ENCODE measurements at regions of chr10 and their contacts with region 1.

Region 1: GRCh38 chr10:89217057-89217990 is 10.2 kb upstream of the CH25H start:
- DNase-seq: peak in 6 of 10 donors; percentile 57 to 88 (median 66)

Region 2: GRCh38 chr10:89029785-89030437 is 187.4 kb before region 1 on chr10:
- intact Hi-C with region 1: loop called (anchors 1 kb)
- DNase-seq: peak; percentile 26 to 96 (median 79)

Region 3: DNA sequence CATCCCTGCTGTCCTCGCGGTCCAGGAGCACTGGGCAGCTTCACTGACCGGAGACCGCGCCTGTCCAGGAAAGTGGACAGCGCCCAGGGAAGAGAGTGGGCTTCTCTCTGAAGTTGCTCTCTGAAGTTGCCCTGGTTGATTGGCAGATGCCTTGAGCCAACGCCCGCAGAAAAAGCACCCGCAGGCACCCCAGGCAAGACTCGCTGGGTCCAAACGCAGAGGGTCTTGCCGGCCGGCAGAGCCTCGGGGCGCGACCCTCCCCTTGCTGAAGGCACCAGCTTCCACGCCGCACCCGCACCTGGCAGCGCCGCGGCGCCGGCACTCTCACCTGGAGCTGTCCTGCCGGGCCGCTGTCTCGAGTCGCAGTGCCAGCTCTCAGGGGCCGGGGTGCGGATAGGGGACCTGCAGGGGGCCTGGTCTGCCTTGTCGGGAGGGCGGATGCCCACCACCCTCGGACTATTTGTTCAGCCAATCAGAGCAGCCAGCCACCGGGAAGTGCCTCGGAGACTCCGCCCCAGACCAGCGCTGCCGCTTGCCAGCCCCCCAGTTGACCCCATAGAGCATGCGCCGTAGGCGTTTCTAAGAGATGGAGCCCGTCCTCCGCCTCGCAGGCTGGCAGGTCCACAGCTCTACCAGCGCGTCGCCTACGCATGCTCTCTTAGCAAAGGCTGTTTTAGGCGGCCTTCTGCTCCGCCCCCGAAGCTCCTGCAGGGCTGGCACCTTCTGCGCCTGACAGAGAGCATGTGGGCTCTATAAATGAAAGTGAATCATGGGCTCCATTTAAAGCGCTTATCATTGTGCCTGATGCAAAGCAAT is 34.3 kb after region 1 on chr10 and contains the start of gene LIPA:
- intact Hi-C with region 1: loop called (anchors 2 kb)
- DNase-seq: peak; percentile 96 to 99 (median 97)

Region 4: DNA sequence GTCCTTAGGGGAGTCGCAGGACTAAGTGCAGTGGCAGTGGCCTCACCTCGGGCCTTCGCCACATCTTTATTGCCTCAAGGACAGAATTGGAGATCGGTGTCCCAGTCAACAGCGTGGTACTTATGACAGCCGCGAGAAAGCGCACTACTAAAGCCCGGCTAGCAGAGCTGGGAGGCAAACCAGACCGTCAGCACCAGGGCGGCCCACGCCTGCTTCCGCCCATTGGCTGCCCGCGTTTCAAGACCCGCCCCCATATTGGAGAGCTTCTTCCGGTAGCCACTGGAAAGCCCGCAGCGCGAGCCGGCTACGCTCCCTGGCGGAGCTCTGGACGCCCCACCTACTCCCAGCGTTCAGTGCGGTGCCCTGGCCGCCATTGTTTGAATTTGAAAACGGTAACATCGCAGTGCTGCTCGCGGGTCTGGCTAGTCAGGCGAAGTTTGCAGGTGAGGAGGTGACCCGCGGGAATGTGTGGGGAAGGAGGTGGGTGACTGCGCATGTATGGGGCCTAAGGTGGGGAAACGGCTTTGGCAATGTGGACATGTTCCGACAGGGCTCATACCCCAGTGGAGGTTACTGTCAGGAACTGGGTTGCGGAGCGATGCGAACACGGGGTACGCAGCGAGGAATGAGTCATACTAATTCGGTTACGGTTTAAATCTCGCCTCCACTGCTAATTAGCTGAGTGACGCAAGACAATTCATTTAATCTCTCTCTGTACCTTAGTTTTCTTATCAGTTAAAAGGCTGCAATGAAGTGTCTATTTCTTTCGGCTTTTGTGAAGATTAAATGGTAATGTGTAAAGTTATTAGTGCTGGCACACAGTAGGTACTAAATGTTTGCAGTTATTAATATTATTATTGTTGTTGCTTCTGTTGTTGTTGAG is 484.2 kb after region 1 on chr10 and contains the start of gene KIF20B:
- intact Hi-C with region 1: loop called (anchors 10 kb)
- DNase-seq: peak; percentile 94 to 99 (median 96)